ENCODE measurements at regions of chr9 and their contacts with region 1.

Region 1: GRCh38 chr9:129080602-129081387 is at the start of gene DOLPP1:
- DNase-seq: peak; percentile 99 to 100
- H3K4me3 ChIP-seq: peak within 1 kb of the TSS; percentile 70
- H3K4me3 Mint-ChIP-seq: peak within 1 kb of the TSS; percentile 86
- H3K27ac Mint-ChIP-seq: peak within 1 kb of the TSS; percentile 80
- H3K4me1 ChIP-seq: peaks cover 14% of the 10 kb centered on the region; the same call in 1 of the 2 replicates
- H3K4me1 Mint-ChIP-seq: peaks cover 5% of the 10 kb centered on the region
- H3K27me3 ChIP-seq: no peaks in the 10 kb centered on the region
- H3K27me3 Mint-ChIP-seq: no peaks in the 10 kb centered on the region
- CTCF ChIP-seq: no peak
- total RNA-seq, gene DOLPP1: 44.7 and 45.1 TPM in 2 replicates

Region 2: DNA sequence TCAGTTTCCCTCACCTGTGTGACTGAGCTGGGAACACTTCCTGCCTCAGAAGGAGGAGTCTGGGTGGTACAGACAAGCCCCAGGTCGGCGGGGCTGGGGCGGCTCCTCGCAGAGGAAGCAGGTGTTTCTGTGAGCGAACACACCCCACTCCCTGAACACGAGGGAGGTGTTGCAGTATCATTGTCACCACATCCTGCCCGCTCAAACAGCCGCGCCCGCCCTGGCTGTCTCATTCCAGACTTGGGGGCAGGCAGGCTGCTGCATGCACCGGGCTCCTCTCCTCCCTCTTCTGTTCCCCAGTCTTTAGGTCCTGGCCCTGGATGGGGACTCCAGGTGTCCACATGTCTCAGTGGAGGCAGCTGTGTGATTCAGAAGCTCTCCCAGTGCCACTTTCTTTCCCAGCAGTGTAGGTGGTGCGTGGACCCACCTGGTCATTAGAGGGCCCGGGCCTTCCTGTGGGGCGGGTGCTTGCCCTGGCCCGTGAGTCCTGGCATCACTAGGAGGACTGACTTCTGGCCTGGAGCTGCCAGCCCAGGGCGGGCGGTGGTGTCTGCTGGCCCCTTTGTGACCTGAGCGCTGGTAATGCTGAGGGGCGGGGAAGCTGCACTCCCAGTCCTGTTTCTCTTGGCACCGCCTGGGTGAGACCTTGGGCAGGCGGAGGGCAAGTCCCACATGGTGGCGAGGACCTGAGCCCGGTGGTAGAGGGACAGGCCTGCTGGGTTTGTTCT is 178.3 kb before region 1 on chr9:
- CTCF ChIA-PET with region 1: no interaction called
- POLR2A ChIA-PET with region 1: no interaction called
- intact Hi-C with region 1: no loop called
- DNase-seq: no peak
- H3K4me3 ChIP-seq: no peak overlapping the region
- H3K4me3 Mint-ChIP-seq: no peak overlapping the region
- H3K27ac Mint-ChIP-seq: no peak overlapping the region
- H3K4me1 ChIP-seq: no peaks in the 10 kb centered on the region
- H3K4me1 Mint-ChIP-seq: no peaks in the 10 kb centered on the region
- H3K27me3 ChIP-seq: no peaks in the 10 kb centered on the region
- H3K27me3 Mint-ChIP-seq: no peaks in the 10 kb centered on the region
- CTCF ChIP-seq: no peak

Region 3: GRCh38 chr9:128927731-128928411 is 152.9 kb before region 1 on chr9:
- CTCF ChIA-PET with region 1: no interaction called
- POLR2A ChIA-PET with region 1: no interaction called
- intact Hi-C with region 1: no loop called
- DNase-seq: peak; percentile 71 to 80
- H3K4me3 ChIP-seq: no peak overlapping the region
- H3K4me3 Mint-ChIP-seq: no peak overlapping the region
- H3K27ac Mint-ChIP-seq: peak overlapping the region; percentile 62
- H3K4me1 ChIP-seq: peaks cover 5% of the 10 kb centered on the region; the same call in 1 of the 2 replicates
- H3K4me1 Mint-ChIP-seq: peaks cover 8% of the 10 kb centered on the region
- H3K27me3 ChIP-seq: no peaks in the 10 kb centered on the region
- H3K27me3 Mint-ChIP-seq: no peaks in the 10 kb centered on the region
- CTCF ChIP-seq: peak; percentile 85

Region 4: GRCh38 chr9:129110740-129111527 is 30.1 kb after region 1 on chr9 and contains the starts of genes CRAT and PTPA:
- CTCF ChIA-PET with region 1: interaction called, 3 read pairs
- POLR2A ChIA-PET with region 1: no interaction called
- intact Hi-C with region 1: loop called (anchors 1 kb)
- DNase-seq: peak; percentile 95 to 98
- H3K4me3 ChIP-seq: peak within 1 kb of the TSS; percentile 82
- H3K4me3 Mint-ChIP-seq: peak within 1 kb of the TSS; percentile 88
- H3K27ac Mint-ChIP-seq: peak within 1 kb of the TSS; percentile 90
- H3K4me1 ChIP-seq: peaks cover 24% of the 10 kb centered on the region
- H3K4me1 Mint-ChIP-seq: peaks cover 36% of the 10 kb centered on the region
- H3K27me3 ChIP-seq: no peaks in the 10 kb centered on the region
- H3K27me3 Mint-ChIP-seq: no peaks in the 10 kb centered on the region
- CTCF ChIP-seq: no peak
- total RNA-seq, gene CRAT: 16.2 and 20.7 TPM in 2 replicates
- total RNA-seq, gene PTPA: 100 and 107 TPM in 2 replicates

Region 5: DNA sequence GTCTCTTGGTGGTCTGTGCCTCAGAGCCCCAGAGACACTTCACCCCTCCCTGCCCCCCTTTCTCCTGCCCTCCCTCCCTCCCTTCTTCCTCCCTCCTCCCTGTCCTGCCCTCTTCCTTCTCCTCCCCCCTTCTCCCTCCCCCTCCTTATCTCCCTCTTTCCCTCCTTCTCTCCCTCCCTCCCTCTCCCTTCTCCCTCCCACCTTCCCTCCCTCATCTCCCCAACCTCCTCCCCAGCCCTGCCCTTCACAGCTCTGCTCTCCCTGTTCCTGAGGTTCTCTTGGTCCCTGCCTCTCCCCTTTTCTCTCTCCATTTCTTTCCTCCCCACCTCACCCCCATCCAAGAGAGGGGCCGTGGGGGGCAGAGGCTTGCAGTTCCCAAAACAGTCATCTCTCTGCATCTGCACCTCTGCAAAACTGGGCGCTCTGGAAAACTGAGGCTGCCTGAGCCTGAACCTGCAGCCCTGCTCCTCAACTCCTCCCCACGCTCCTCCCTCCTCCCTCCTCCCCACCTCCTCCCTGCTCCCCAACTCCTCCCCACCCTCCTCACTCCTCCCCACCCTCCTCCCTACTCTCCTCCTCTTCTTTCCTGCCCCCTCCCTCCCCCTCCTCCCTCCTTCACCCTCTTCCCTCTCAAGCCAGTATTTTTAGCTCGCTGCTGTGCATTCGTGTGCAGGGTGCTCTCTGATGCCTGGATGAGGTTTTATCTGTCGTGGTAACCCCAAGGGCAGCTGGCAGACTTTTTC is 321.0 kb after region 1 on chr9:
- CTCF ChIA-PET with region 1: no interaction called
- POLR2A ChIA-PET with region 1: no interaction called
- intact Hi-C with region 1: no loop called
- DNase-seq: no peak
- H3K4me3 ChIP-seq: no peak overlapping the region
- H3K4me3 Mint-ChIP-seq: no peak overlapping the region
- H3K27ac Mint-ChIP-seq: no peak overlapping the region
- H3K4me1 ChIP-seq: peaks cover 14% of the 10 kb centered on the region; the same call in 1 of the 2 replicates
- H3K4me1 Mint-ChIP-seq: peaks cover 8% of the 10 kb centered on the region
- H3K27me3 ChIP-seq: no peaks in the 10 kb centered on the region
- H3K27me3 Mint-ChIP-seq: no peaks in the 10 kb centered on the region
- CTCF ChIP-seq: no peak

Region 6: GRCh38 chr9:129436751-129437625 is 356.2 kb after region 1 on chr9:
- CTCF ChIA-PET with region 1: no interaction called
- POLR2A ChIA-PET with region 1: no interaction called
- intact Hi-C with region 1: no loop called
- DNase-seq: peak in 1 of 2 experiments; percentile 57
- H3K4me3 ChIP-seq: peak overlapping the region; percentile 42
- H3K4me3 Mint-ChIP-seq: peak overlapping the region; percentile 72
- H3K27ac Mint-ChIP-seq: peak overlapping the region; percentile 7
- H3K4me1 ChIP-seq: peaks cover 7% of the 10 kb centered on the region; the same call in 1 of the 2 replicates
- H3K4me1 Mint-ChIP-seq: peaks cover 11% of the 10 kb centered on the region
- H3K27me3 ChIP-seq: no peaks in the 10 kb centered on the region
- H3K27me3 Mint-ChIP-seq: no peaks in the 10 kb centered on the region
- CTCF ChIP-seq: no peak

Measured in Caco-2 (cell line).